Mammary epithelial cell (primary cell): ENCODE measurements at regions of chr13 and their contacts with region 1.

Region 1: DNA sequence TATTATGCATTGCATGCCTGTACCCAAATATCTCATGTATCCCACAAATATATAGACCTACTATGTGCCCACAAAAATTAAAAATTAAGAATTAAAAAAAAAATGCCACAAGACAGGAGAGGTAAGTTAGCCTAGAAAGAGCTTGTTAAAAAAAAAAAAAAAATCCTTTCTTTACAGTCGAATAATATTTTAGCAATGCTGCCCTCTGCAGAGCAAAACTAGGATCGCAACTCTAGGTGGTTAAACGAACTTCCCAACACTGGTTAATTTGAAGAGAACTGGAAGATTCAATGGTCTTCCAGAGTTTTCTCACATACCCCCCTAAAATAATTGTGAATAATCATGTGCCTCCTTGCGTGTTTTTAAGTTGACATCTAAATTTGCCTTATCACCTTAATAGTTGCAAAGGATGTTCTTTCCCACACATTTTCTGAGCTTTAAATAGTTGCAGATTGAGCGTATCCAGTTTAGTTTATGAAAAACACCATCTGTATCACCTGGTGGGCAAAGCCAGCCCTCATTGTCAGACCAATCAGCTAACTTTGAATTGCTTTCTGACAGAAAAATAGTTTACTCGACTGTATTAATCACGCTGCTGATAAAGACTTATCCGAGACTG is 47.4 kb upstream of the RCBTB2 start:
- DNase-seq: peak; percentile 59
- H3K4me3 ChIP-seq: no peak overlapping the region
- H3K27ac ChIP-seq: no peak overlapping the region
- H3K4me1 ChIP-seq: peaks cover 40% of the 10 kb centered on the region
- H3K27me3 ChIP-seq: no peaks in the 10 kb centered on the region
- CTCF ChIP-seq: peak; percentile 70 to 71

Region 2: GRCh38 chr13:47794963-47795362 is 785.3 kb before region 1 on chr13:
- CTCF ChIA-PET with region 1: no interaction called
- dilution Hi-C with region 1: no loop called
- in situ Hi-C with region 1: no loop called
- intact Hi-C with region 1: loop called (anchors 1 kb)
- DNase-seq: peak; percentile 4
- H3K4me3 ChIP-seq: no peak overlapping the region
- H3K27ac ChIP-seq: no peak overlapping the region
- H3K4me1 ChIP-seq: no peaks in the 10 kb centered on the region
- H3K27me3 ChIP-seq: no peaks in the 10 kb centered on the region
- CTCF ChIP-seq: peak; percentile 70 to 72

Region 3: DNA sequence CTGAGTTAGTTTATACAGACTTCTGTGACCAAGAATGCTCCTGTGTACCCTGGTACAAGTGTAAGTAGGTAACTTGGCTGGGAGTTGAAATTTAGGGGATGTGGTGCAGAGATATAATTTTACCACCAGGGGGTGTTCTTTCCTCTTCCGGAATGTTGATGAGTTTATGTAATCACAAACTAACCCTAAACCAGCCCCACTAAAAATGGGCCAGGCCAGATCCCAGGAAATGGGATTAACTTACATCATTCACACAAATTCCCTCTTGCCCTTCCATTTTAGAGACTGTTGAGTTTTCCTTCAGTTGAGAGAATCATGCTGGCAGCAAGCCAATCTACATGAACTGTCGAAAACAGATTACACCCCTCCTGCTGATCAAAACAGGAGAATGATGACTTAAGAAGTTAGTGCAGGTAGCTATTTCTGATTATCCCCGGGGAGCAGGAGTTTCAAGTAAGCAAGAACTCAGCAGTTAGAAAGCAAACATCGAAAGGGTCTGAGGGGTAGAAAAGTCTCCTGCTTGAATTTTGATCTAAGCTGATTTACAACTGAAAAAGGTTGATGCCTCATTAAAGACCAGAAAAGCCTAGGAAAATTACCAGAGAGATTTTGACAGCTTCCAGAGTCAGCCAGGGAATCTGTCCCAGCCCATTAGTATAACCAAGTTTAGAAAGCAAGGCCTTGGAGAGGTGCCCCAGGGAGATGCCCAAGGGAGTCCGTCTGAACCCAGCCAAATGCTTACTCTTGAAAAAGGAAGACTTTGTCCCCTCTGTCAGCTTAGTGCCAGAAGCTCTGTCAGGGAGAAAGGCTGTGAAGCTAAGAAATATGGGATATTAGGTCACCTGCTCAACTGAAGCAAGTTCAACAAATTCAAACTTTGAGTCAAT is 453.1 kb before region 1 on chr13:
- CTCF ChIA-PET with region 1: interaction called, 11 read pairs
- dilution Hi-C with region 1: no loop called
- in situ Hi-C with region 1: loop called in 1 of 2 experiments (anchors 10 kb)
- intact Hi-C with region 1: loop called (anchors 1 kb)
- DNase-seq: peak; percentile 67
- H3K4me3 ChIP-seq: no peak overlapping the region
- H3K27ac ChIP-seq: peak overlapping the region; percentile 29
- H3K4me1 ChIP-seq: peaks cover 24% of the 10 kb centered on the region
- H3K27me3 ChIP-seq: no peaks in the 10 kb centered on the region
- CTCF ChIP-seq: peak; percentile 61 to 72

Region 4: GRCh38 chr13:48334534-48335127 is 245.7 kb before region 1 on chr13:
- CTCF ChIA-PET with region 1: interaction called, 9 read pairs
- dilution Hi-C with region 1: no loop called
- in situ Hi-C with region 1: loop called (anchors 5 to 10 kb)
- intact Hi-C with region 1: loop called (anchors 1 kb)
- DNase-seq: peak; percentile 17
- H3K4me3 ChIP-seq: no peak overlapping the region
- H3K27ac ChIP-seq: peak overlapping the region; percentile 59
- H3K4me1 ChIP-seq: peaks cover 17% of the 10 kb centered on the region
- H3K27me3 ChIP-seq: no peaks in the 10 kb centered on the region
- CTCF ChIP-seq: peak; percentile 42 to 59

Region 5: GRCh38 chr13:48412881-48413351 is 167.4 kb before region 1 on chr13 and contains the start of gene LPAR6:
- CTCF ChIA-PET with region 1: no interaction called
- dilution Hi-C with region 1: no loop called
- in situ Hi-C with region 1: no loop called
- intact Hi-C with region 1: loop called (anchors 2 kb)
- DNase-seq: peak; percentile 62
- H3K4me3 ChIP-seq: peak within 1 kb of the TSS; percentile 62 to 78 (median 67)
- H3K27ac ChIP-seq: peak within 1 kb of the TSS; percentile 85
- H3K4me1 ChIP-seq: no peaks in the 10 kb centered on the region
- H3K27me3 ChIP-seq: no peaks in the 10 kb centered on the region
- CTCF ChIP-seq: no peak
- total RNA-seq, gene LPAR6: 7.9 to 17.2 TPM

Region 6: GRCh38 chr13:48505597-48506091 is 74.7 kb before region 1 on chr13:
- CTCF ChIA-PET with region 1: interaction called, 4 read pairs
- dilution Hi-C with region 1: no loop called
- in situ Hi-C with region 1: no loop called
- intact Hi-C with region 1: loop called (anchors 5 kb)
- DNase-seq: peak; percentile 51
- H3K4me3 ChIP-seq: no peak overlapping the region
- H3K27ac ChIP-seq: peak overlapping the region; percentile 53
- H3K4me1 ChIP-seq: peaks cover 54% of the 10 kb centered on the region
- H3K27me3 ChIP-seq: no peaks in the 10 kb centered on the region
- CTCF ChIP-seq: no peak